ENCODE measurements at regions of chr1 and their contacts with region 1.

Region 1: GRCh38 chr1:204398217-204399081 is 13.2 kb downstream of the PPP1R15B start:
- DNase-seq: peak; percentile 80
- H3K4me3 ChIP-seq: no peak overlapping the region
- H3K27ac ChIP-seq: no peak overlapping the region
- H3K4me1 ChIP-seq: no peaks in the 10 kb centered on the region
- H3K27me3 ChIP-seq: no peaks in the 10 kb centered on the region
- CTCF ChIP-seq: peak; percentile 80 to 86
- POLR2A ChIP-seq: no peak

Region 2: GRCh38 chr1:203692565-203693470 is 705.6 kb before region 1 on chr1:
- CTCF ChIA-PET with region 1: no interaction called
- POLR2A ChIA-PET with region 1: no interaction called
- dilution Hi-C with region 1: no loop called
- intact Hi-C with region 1: no loop called
- DNase-seq: peak; percentile 88
- H3K4me3 ChIP-seq: no peak overlapping the region
- H3K27ac ChIP-seq: peak overlapping the region; percentile 48
- H3K4me1 ChIP-seq: peaks cover 20% of the 10 kb centered on the region
- H3K27me3 ChIP-seq: no peaks in the 10 kb centered on the region
- CTCF ChIP-seq: no peak
- POLR2A ChIP-seq: no peak

Region 3: DNA sequence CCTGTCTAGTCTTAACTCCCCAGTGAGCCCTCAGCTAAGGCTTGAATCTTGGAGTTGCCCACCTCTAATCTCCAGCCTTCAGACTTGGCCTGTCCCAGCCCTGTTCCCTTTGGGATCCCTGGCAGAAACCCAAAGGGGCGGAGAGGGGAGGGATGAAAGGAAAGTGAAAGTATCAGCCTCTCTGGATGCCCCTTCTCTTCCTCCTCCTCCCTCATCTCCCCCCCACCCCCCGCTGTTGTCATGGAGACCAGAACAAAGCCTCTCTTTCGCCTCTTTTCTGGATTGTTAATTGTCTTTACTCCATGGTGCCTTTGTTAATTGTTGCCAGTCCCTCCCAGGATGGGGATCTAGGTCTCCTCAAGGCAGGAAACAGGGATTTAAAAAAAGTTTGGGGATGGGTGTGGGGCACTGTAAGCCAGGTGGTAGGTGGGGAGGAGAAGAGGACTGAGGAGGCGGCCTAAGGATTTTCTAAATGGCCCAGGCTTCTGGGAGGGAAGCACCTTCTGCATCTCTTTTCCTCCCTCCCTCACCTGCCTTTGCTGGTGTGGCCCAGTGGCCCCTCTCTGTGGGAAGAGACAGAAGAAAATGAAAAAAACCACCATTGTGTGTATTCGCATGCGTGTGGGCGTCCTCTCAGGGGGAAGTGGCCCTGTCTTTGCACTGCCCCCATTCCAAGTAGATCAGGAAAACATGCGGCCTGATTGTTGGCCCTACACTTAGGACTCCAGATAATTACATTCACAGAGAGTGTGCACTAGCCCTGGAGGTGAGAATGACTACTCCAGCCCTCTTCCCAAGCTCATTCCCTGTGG is 333.1 kb before region 1 on chr1:
- CTCF ChIA-PET with region 1: no interaction called
- POLR2A ChIA-PET with region 1: no interaction called
- dilution Hi-C with region 1: no loop called
- intact Hi-C with region 1: no loop called
- DNase-seq: peak; percentile 47
- H3K4me3 ChIP-seq: no peak overlapping the region
- H3K27ac ChIP-seq: no peak overlapping the region
- H3K4me1 ChIP-seq: peaks cover 6% of the 10 kb centered on the region
- H3K27me3 ChIP-seq: peaks cover 0 to 2% of the 10 kb centered on the region in 2 experiments
- CTCF ChIP-seq: no peak
- POLR2A ChIP-seq: no peak

Region 4: DNA sequence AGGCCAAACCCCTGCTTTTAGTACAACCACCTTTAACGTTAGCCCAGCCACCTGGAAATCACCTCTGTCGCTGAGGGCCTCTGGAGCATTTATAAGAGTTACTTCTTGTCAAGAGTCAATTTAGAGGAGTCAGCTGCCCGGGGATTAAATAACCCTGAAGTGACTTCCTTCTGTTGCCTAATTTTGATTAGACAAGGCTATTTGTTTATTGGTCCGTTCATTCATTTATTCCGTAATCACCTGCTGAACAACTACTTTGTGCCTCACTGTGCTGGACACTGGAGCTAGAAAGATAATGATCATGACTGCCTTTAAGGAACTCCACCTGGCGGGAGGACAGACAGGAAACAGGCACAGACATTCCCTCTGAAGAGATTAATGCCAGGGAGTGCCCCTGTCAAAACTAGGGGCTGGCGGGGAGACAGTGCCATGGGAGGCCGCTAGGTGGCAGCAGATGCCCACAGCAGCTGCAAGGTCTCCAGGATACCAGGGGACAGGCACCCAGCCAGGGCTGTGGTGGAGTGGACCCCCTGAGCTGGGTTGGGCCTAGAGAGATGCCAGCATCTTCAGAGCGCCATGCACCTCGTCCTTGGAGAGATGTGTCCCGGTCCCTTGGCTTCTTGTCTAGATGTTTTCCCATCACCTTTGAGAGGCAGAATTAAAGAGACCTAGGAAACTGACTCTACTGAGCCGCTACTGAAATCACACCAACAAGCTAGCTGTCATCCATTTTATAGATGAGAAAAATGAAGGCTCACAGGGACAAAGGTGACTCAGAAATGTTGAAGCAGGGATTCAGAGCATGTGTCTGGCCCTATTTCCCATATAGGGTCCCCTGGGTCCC is 236.0 kb before region 1 on chr1:
- CTCF ChIA-PET with region 1: interaction called, 82 read pairs
- POLR2A ChIA-PET with region 1: no interaction called
- dilution Hi-C with region 1: no loop called
- intact Hi-C with region 1: loop called (anchors 1 kb)
- DNase-seq: peak; percentile 68
- H3K4me3 ChIP-seq: no peak overlapping the region
- H3K27ac ChIP-seq: no peak overlapping the region
- H3K4me1 ChIP-seq: peaks cover 3% of the 10 kb centered on the region
- H3K27me3 ChIP-seq: peaks cover 0 to 2% of the 10 kb centered on the region in 2 experiments
- CTCF ChIP-seq: peak; percentile 98
- POLR2A ChIP-seq: no peak

Region 5: DNA sequence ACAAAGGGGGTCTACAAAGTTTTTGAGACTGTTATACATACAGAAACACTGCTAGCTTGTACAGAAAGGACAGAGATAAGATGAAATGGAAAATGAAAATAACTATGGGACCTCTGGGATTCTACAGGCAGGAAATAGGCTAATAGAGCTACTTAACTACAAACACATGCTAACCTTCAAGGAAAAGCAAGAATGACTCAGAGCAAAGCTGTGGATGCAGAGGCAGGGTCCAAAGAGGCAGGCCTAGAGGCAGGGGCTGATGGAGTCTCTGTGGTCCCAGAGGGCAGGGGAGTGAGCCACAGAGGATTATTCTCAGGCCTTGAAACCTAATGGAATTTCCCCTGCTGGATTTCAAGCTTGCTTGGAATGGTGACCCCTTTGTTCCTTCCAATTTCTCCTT is 165.9 kb before region 1 on chr1:
- CTCF ChIA-PET with region 1: interaction called, 11 read pairs
- POLR2A ChIA-PET with region 1: no interaction called
- dilution Hi-C with region 1: no loop called
- intact Hi-C with region 1: no loop called
- DNase-seq: no peak
- H3K4me3 ChIP-seq: no peak overlapping the region
- H3K27ac ChIP-seq: no peak overlapping the region
- H3K4me1 ChIP-seq: no peaks in the 10 kb centered on the region
- H3K27me3 ChIP-seq: no peaks in the 10 kb centered on the region
- CTCF ChIP-seq: no peak
- POLR2A ChIP-seq: no peak

Region 6: GRCh38 chr1:204368996-204369726 is 29.3 kb before region 1 on chr1:
- CTCF ChIA-PET with region 1: interaction called, 164 read pairs
- POLR2A ChIA-PET with region 1: interaction called, 4 read pairs
- dilution Hi-C with region 1: no loop called
- intact Hi-C with region 1: loop called (anchors 2 kb)
- DNase-seq: peak; percentile 57
- H3K4me3 ChIP-seq: no peak overlapping the region
- H3K27ac ChIP-seq: no peak overlapping the region
- H3K4me1 ChIP-seq: peaks cover 20% of the 10 kb centered on the region
- H3K27me3 ChIP-seq: no peaks in the 10 kb centered on the region
- CTCF ChIP-seq: no peak
- POLR2A ChIP-seq: no peak

Region 7: GRCh38 chr1:204417231-204417997 is 19.0 kb after region 1 on chr1:
- CTCF ChIA-PET with region 1: interaction called, 17 read pairs
- POLR2A ChIA-PET with region 1: no interaction called
- dilution Hi-C with region 1: no loop called
- intact Hi-C with region 1: no loop called
- DNase-seq: peak; percentile 95
- H3K4me3 ChIP-seq: peak overlapping the region in 1 of 3 experiments; percentile 31
- H3K27ac ChIP-seq: peak overlapping the region; percentile 84
- H3K4me1 ChIP-seq: peaks cover 26% of the 10 kb centered on the region
- H3K27me3 ChIP-seq: no peaks in the 10 kb centered on the region
- CTCF ChIP-seq: no peak
- POLR2A ChIP-seq: no peak

Region 8: GRCh38 chr1:204480515-204480914 is 82.1 kb after region 1 on chr1:
- CTCF ChIA-PET with region 1: interaction called, 13 read pairs
- POLR2A ChIA-PET with region 1: no interaction called
- dilution Hi-C with region 1: no loop called
- intact Hi-C with region 1: no loop called
- DNase-seq: no peak
- H3K4me3 ChIP-seq: no peak overlapping the region
- H3K27ac ChIP-seq: no peak overlapping the region
- H3K4me1 ChIP-seq: peaks cover 27% of the 10 kb centered on the region
- H3K27me3 ChIP-seq: no peaks in the 10 kb centered on the region
- CTCF ChIP-seq: no peak
- POLR2A ChIP-seq: no peak

Measured in endothelial cell of umbilical vein (primary cell).